ENCODE measurements at regions of chr12 and their contacts with region 1.

Region 1: DNA sequence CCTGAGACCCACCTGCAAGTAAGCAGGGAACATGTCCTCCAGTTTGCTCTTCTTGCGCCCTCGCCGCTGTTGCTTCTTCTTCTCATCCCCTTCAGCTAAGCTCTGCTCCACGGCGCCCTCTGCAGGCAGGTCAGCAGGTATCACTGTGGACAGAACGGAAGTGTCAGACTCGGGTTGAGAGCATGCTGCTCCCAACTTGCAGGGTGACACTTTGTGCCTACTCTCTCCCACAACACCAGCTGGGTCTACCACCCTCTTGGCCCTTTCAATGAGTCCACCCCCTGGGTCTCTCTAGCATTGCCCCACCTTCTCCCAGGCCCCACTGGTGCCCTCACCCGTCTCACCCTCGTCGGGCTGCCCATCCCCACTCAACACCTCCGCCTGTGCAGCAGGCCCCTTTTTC is 16.7 kb downstream of the KMT2D start:
- DNase-seq: peak; percentile 19
- H3K4me3 ChIP-seq: no peak overlapping the region
- H3K27ac ChIP-seq: no peak overlapping the region
- H3K4me1 ChIP-seq: no peaks in the 10 kb centered on the region
- H3K27me3 ChIP-seq: no peaks in the 10 kb centered on the region
- CTCF ChIP-seq: peak; percentile 67 to 83

Region 2: DNA sequence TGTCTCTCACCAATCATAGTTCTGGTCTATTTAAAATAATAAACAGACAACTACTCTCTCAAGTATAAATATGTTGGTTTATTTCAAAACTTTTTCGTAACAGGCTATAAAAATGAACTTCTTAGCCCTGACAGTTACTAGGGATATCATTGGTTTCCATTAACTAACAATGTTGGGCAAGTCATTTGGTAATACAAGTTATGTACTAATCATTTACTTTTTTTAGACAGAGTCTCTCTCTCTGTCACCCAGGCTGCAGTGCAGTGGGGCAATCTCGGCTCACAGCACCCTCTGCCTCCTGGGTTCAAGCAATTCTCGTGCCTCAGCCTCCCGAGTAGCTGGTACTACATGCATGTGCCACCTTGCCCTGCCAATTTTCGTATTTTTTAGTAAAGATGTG is 347.2 kb before region 1 on chr12:
- CTCF ChIA-PET with region 1: interaction called, 18 read pairs
- dilution Hi-C with region 1: no loop called
- in situ Hi-C with region 1: no loop called
- intact Hi-C with region 1: no loop called
- DNase-seq: no peak
- H3K4me3 ChIP-seq: no peak overlapping the region
- H3K27ac ChIP-seq: no peak overlapping the region
- H3K4me1 ChIP-seq: no peaks in the 10 kb centered on the region
- H3K27me3 ChIP-seq: no peaks in the 10 kb centered on the region
- CTCF ChIP-seq: no peak

Region 3: GRCh38 chr12:48744251-48745008 is 299.4 kb before region 1 on chr12:
- CTCF ChIA-PET with region 1: no interaction called
- dilution Hi-C with region 1: no loop called
- in situ Hi-C with region 1: no loop called
- intact Hi-C with region 1: no loop called
- DNase-seq: no peak
- H3K4me3 ChIP-seq: no peak overlapping the region
- H3K27ac ChIP-seq: no peak overlapping the region
- H3K4me1 ChIP-seq: no peaks in the 10 kb centered on the region
- H3K27me3 ChIP-seq: no peaks in the 10 kb centered on the region
- CTCF ChIP-seq: no peak

Region 4: DNA sequence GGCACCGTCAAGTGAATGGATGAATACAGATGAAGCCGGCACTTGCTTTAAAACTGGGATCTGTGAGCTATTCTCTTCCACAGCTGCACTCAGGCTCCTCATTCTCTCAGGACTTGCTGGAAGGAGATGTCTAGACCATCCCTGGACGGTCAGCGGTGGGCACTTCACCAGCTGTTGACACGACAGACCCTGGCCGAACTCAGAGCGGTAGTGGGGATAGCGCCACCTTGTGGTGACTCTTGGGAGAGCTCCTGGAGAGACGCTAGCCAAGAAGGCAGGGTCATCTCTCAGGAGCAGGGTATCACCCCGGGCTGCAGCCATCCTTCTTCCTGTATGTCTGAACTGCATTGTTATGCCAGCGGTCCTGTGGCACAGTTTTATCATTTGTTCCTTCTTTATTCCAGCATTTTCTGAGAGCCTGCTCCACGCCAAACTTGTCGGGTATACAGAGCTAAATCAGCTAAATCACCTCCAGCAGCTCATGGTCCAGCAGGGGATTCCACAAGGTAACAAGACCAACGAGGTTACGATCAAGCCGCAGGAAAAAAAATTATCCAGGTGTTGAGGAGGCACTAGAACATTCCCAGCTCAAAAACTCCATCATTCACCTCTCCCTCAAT is 55.7 kb before region 1 on chr12:
- CTCF ChIA-PET with region 1: no interaction called
- dilution Hi-C with region 1: loop called (anchors 10 kb)
- in situ Hi-C with region 1: no loop called
- intact Hi-C with region 1: no loop called
- DNase-seq: no peak
- H3K4me3 ChIP-seq: no peak overlapping the region
- H3K27ac ChIP-seq: no peak overlapping the region
- H3K4me1 ChIP-seq: no peaks in the 10 kb centered on the region
- H3K27me3 ChIP-seq: no peaks in the 10 kb centered on the region
- CTCF ChIP-seq: peak; percentile 77 to 90

Measured in mammary epithelial cell (primary cell).